HepG2 (cell line): ENCODE measurements at regions of chr20 and their contacts with region 1.

Region 1: GRCh38 chr20:63739130-63740069 is at the start of gene SLC2A4RG:
- DNase-seq: peak; percentile 94
- ATAC-seq: peak; percentile 15
- H3K4me3 ChIP-seq: peak within 1 kb of the TSS; percentile 74 to 93 (median 85)
- H3K27ac ChIP-seq: peak within 1 kb of the TSS; percentile 93
- H3K4me1 ChIP-seq: peaks cover 64% of the 10 kb centered on the region
- H3K27me3 ChIP-seq: no peaks in the 10 kb centered on the region
- CTCF ChIP-seq: peak; percentile 54
- EP300 ChIP-seq: peak; percentile 36 to 77; a peak in 3 of 4 replicates
- POLR2A ChIP-seq: peak in 1 of 2 experiments; percentile 54; a peak in 2 of 4 replicates
- RAD21 ChIP-seq: peak; percentile 76
- total RNA-seq, gene SLC2A4RG: 47.4 and 91.4 TPM in 2 replicates

Region 2: GRCh38 chr20:63698739-63699465 is 40.5 kb before region 1 on chr20:
- CTCF ChIA-PET with region 1: no interaction called
- POLR2A ChIA-PET with region 1: interaction called, 190 read pairs
- in situ Hi-C with region 1: no loop called
- intact Hi-C with region 1: no loop called
- DNase-seq: no peak
- ATAC-seq: no peak
- H3K4me3 ChIP-seq: no peak overlapping the region
- H3K27ac ChIP-seq: no peak overlapping the region
- H3K4me1 ChIP-seq: peaks cover 21% of the 10 kb centered on the region
- H3K27me3 ChIP-seq: no peaks in the 10 kb centered on the region
- CTCF ChIP-seq: no peak
- EP300 ChIP-seq: no peak
- POLR2A ChIP-seq: peak in 1 of 2 experiments; percentile 48; a peak in 2 of 4 replicates
- RAD21 ChIP-seq: no peak

Region 3: GRCh38 chr20:63750807-63751470 is 11.5 kb after region 1 on chr20:
- CTCF ChIA-PET with region 1: no interaction called
- POLR2A ChIA-PET with region 1: interaction called, 28 read pairs
- in situ Hi-C with region 1: no loop called
- intact Hi-C with region 1: no loop called
- DNase-seq: no peak
- ATAC-seq: no peak
- H3K4me3 ChIP-seq: no peak overlapping the region
- H3K27ac ChIP-seq: no peak overlapping the region
- H3K4me1 ChIP-seq: peaks cover 53% of the 10 kb centered on the region
- H3K27me3 ChIP-seq: peaks cover 0 to 2% of the 10 kb centered on the region in 2 experiments; a peak in 1 of 5 replicates
- CTCF ChIP-seq: no peak
- EP300 ChIP-seq: no peak
- POLR2A ChIP-seq: no peak
- RAD21 ChIP-seq: no peak

Region 4: DNA sequence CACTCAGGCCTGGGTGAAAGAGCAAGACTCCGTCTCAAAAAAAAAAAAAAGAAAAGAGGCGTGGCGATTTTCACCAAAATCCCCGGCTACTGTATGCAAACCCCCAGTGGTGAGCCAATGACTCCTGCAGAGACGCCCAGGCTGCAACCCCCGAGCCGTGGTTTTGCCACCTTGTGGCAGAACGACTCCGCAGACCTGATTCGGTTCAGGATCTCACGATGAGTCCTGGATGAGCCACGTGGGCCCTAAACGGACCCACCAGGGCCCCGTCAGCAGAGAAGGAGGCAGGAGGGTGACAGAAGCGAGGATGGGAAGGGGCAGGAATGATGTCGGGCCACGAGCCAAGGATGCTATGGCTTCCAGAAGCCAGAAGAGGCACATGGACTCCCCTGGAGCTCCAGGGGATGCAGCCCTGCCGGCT is 42.7 kb after region 1 on chr20:
- CTCF ChIA-PET with region 1: no interaction called
- POLR2A ChIA-PET with region 1: interaction called, 3 read pairs
- in situ Hi-C with region 1: no loop called
- intact Hi-C with region 1: loop called (anchors 2 kb)
- DNase-seq: peak; percentile 60
- ATAC-seq: peak; percentile 84
- H3K4me3 ChIP-seq: peak overlapping the region in 1 of 3 experiments; percentile 25; a peak in 1 of 6 replicates
- H3K27ac ChIP-seq: no peak overlapping the region
- H3K4me1 ChIP-seq: peaks cover 21% of the 10 kb centered on the region
- H3K27me3 ChIP-seq: no peaks in the 10 kb centered on the region
- CTCF ChIP-seq: peak; percentile 78
- EP300 ChIP-seq: no peak
- POLR2A ChIP-seq: no peak
- RAD21 ChIP-seq: peak; percentile 66; the same call in 1 of the 2 replicates